Calu3 (cell line): ENCODE measurements at regions of chr1 and their contacts with region 1.

Region 1: GRCh38 chr1:196136396-196136795 is 471.8 kb downstream of the KCNT2 start:
- DNase-seq: no peak
- H3K4me3 Mint-ChIP-seq: no peak overlapping the region
- H3K27ac Mint-ChIP-seq: no peak overlapping the region
- H3K4me1 Mint-ChIP-seq: no peaks in the 10 kb centered on the region
- H3K27me3 Mint-ChIP-seq: no peaks in the 10 kb centered on the region
- CTCF ChIP-seq: no peak

Region 2: DNA sequence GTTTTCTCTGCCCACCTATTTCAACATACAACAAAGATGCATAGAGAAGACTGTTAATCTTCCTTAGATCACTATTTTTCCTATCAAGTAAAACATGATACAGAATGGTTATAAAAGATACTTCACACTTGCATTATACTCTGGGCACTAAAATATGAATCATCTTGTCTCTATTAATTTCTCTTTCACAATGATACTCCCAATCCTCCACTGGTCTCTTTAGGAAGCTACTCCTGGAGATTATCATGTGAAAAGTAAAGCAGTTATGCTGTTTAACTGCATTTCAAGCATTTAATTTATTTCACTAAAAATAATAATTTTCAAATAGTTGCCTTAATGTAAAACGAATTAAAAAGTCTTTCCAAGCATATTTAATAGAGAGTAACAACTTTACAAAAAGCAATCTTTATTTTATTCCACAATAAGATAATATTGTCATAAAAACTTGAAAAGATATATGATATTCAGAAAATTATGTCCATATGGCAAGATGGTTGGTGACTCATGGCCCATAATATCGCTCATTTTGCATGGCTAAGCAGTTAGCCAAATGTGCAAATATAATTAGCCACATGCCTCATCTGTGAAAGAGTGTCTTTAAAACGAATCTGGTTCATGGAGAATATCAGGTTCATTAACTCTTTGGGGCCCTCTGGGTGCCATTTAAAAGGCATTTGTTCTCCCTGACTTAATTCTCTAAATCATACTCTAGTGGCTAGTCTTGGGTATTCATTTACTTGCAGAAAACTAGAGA is 1381.0 kb before region 1 on chr1:
- CTCF ChIA-PET with region 1: interaction called, 10 read pairs
- intact Hi-C with region 1: no loop called
- DNase-seq: no peak
- H3K4me3 Mint-ChIP-seq: no peak overlapping the region
- H3K27ac Mint-ChIP-seq: no peak overlapping the region
- H3K4me1 Mint-ChIP-seq: no peaks in the 10 kb centered on the region
- H3K27me3 Mint-ChIP-seq: no peaks in the 10 kb centered on the region
- CTCF ChIP-seq: no peak